SK-N-SH (cell line): ENCODE measurements at regions of chr17 and their contacts with region 1.

Region 1: DNA sequence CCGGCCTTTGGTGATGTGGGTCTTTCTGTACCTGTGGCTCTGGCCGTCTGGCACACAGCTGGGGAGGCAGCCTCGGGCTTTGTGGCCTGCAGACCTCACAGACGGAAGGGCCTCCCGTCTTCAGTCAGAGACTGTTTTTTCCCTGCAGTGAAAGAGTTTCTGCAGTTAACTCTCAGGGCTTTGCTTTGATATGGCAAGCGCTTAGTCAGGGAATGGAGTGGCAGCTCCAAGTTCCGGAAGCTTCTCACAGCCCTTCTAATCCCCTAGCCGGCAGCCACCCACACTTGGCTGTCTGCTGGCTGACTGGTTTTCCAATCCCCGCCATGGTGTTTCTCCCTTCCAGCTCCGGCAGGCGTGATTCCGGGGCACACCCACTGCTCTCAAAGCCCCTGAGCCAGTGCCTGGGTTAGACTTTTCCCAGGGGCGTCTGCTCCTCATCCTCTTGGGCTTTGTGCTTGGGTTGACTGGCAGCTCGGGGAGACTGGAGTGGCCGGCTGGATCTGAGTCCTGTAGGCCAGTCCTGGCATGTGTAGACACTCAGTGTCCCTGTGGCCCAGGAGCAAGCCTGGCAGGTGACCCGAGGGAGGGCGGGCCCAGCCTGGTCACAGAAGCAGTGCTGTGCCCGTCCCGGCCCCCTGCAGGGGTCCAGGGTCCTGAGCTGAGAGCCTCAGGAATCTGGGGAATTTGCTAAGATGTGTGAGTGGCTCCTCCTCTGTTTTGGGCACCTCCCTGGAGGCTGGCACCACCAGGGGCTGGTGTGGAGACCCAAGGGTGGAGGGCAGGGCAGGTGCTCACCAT is 29.9 kb downstream of the BAIAP2 start:
- DNase-seq: peak; percentile 72
- H3K4me3 ChIP-seq: no peak overlapping the region
- H3K27ac ChIP-seq: peak overlapping the region in 1 of 2 experiments; percentile 64; a peak in 2 of 4 replicates
- H3K4me1 ChIP-seq: peaks cover 0 to 54% of the 10 kb centered on the region in 2 experiments; a peak in 1 of 4 replicates
- H3K27me3 ChIP-seq: no peaks in the 10 kb centered on the region
- CTCF ChIP-seq: no peak
- EP300 ChIP-seq: no peak
- RAD21 ChIP-seq: no peak

Region 2: GRCh38 chr17:80920441-80920840 is 144.4 kb before region 1 on chr17:
- CTCF ChIA-PET with region 1: no interaction called
- POLR2A ChIA-PET with region 1: no interaction called
- DNase-seq: no peak
- H3K4me3 ChIP-seq: no peak overlapping the region
- H3K27ac ChIP-seq: no peak overlapping the region
- H3K4me1 ChIP-seq: no peaks in the 10 kb centered on the region
- H3K27me3 ChIP-seq: no peaks in the 10 kb centered on the region
- CTCF ChIP-seq: no peak
- EP300 ChIP-seq: no peak
- RAD21 ChIP-seq: no peak

Region 3: DNA sequence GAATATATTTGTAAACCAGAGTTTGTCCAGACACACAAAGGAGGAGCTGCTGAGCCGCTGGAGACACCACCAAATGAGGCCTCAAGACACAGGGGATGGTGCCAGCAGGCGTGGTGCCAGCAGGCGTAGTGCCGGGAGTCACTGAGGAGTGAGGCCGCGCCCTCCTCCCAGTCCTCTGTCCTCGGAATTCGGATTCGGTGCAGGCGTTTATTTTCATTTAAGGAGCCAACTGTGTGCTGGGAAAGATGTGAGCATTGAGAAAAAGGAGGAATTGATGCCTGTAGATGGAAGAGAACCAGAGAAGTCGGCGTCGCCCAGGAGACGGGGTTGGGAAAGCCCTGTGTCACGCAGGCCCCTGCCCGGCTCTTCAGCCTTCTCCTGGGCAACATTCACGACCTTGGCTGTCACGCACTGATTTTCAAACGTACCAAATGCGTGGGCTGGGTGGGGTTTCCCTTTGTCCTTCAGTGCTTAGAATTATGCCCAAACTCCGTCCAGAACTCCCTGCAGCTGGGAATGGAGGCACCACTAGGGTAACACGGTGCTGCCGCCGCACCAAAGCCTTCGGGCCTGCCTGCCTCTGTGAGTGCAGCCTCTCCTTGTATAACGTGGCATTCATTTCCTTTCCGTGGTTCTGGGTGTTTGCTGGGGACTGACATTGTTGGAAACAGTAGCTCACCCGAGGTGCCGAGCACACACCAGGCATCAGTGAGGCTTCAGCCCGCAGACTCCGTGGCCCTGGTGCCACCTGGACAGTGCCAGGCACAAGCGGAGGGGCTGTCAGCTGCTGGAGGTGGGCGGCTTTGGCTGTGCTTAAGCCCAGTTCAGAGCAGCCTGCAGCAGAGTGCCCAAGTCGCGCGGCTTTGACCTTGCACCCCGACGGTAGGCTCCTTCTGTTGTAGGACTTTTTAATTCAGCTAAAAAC is 122.2 kb before region 1 on chr17:
- CTCF ChIA-PET with region 1: no interaction called
- POLR2A ChIA-PET with region 1: no interaction called
- DNase-seq: no peak
- H3K4me3 ChIP-seq: no peak overlapping the region
- H3K27ac ChIP-seq: no peak overlapping the region
- H3K4me1 ChIP-seq: no peaks in the 10 kb centered on the region; a peak in 1 of 4 replicates
- H3K27me3 ChIP-seq: no peaks in the 10 kb centered on the region
- CTCF ChIP-seq: no peak
- EP300 ChIP-seq: no peak
- RAD21 ChIP-seq: no peak

Region 4: DNA sequence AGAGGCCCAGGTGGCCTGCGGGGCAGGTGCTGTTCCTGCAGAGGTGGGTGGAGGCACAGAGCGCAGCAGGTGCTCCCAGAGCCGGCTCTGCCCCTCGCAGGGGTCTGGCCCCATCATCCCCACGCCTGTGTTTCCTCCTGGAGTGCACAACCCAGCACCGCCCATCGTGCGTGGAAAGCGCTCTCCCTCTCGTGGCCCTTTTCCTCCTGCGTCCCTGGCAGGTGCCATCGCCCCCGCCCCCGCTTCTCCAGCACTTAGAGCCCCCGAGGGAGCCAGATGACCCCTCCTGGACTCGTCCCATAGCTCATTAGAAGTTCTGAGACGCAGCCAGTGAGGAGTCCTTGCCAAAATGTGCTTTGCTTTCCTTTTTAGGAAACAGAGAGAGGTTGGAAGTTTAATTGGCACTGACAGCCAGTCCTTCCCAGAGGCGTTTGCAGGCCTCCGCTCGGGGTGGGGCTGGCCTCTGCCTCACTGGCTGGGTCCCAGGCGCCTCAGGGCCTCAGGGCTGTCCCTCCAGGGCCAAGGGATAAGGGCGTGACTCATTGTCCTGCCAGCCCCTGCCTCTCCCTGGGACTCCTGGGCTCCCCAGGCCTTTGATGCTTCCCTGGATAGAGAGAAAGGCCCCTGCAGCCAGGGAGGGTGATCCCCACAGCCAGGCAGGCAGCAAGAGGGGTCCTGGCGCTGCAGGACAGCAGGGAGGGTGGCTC is 105.4 kb before region 1 on chr17:
- CTCF ChIA-PET with region 1: no interaction called
- POLR2A ChIA-PET with region 1: no interaction called
- DNase-seq: peak; percentile 69
- H3K4me3 ChIP-seq: no peak overlapping the region
- H3K27ac ChIP-seq: peak overlapping the region in 1 of 2 experiments; percentile 79; a peak in 2 of 4 replicates
- H3K4me1 ChIP-seq: peaks cover 0 to 37% of the 10 kb centered on the region in 2 experiments; a peak in 2 of 4 replicates
- H3K27me3 ChIP-seq: no peaks in the 10 kb centered on the region
- CTCF ChIP-seq: no peak
- EP300 ChIP-seq: no peak
- RAD21 ChIP-seq: no peak

Region 5: DNA sequence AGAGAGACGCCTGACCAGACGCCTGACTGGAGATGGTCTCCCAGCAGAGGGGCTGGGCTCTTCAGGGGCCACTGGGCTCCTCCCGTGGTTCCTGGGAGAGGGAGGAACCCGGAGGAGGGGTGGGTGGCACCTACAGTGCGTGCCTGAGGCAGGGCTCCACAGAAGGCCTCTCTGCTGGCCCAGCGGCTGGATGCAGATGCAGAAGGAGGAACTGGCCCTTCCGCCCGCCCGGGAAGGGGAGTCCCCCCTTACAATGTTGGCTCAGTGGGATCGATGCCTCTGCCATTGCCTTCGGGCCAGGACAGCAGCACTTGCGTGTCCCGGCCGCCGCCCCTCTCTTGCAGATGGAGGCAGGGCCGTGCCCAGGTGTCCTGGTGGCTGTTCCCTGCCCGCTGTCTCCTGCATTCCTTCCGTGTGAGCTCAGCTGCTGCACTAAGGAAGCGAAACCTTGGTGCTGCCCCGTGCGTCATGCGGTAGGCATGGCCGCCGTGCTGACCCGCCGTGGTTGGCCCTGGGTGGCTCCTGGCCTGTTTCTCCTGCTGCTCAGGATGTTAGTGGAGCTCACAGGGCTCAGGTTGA is 14.8 kb before region 1 on chr17:
- CTCF ChIA-PET with region 1: interaction called, 10 read pairs
- POLR2A ChIA-PET with region 1: no interaction called
- DNase-seq: peak; percentile 50
- H3K4me3 ChIP-seq: no peak overlapping the region
- H3K27ac ChIP-seq: no peak overlapping the region
- H3K4me1 ChIP-seq: peaks cover 9 to 48% of the 10 kb centered on the region in 2 experiments; a peak in 3 of 4 replicates
- H3K27me3 ChIP-seq: no peaks in the 10 kb centered on the region
- CTCF ChIP-seq: no peak
- EP300 ChIP-seq: no peak
- RAD21 ChIP-seq: no peak

Region 6: GRCh38 chr17:81118308-81119221 is 53.7 kb after region 1 on chr17:
- CTCF ChIA-PET with region 1: no interaction called
- POLR2A ChIA-PET with region 1: no interaction called
- DNase-seq: no peak
- H3K4me3 ChIP-seq: no peak overlapping the region
- H3K27ac ChIP-seq: no peak overlapping the region
- H3K4me1 ChIP-seq: peaks cover 0 to 37% of the 10 kb centered on the region in 2 experiments; a peak in 1 of 4 replicates
- H3K27me3 ChIP-seq: no peaks in the 10 kb centered on the region
- CTCF ChIP-seq: no peak
- EP300 ChIP-seq: no peak
- RAD21 ChIP-seq: no peak